Head of caudate nucleus (tissue), 42 donors: ENCODE measurements at regions of chr5 and their contacts with region 1.

Region 1: GRCh38 chr5:172697123-172698121 is 56.4 kb downstream of the NEURL1B start:
- DNase-seq: peak; percentile 70 to 95 (median 87)

Region 2: DNA sequence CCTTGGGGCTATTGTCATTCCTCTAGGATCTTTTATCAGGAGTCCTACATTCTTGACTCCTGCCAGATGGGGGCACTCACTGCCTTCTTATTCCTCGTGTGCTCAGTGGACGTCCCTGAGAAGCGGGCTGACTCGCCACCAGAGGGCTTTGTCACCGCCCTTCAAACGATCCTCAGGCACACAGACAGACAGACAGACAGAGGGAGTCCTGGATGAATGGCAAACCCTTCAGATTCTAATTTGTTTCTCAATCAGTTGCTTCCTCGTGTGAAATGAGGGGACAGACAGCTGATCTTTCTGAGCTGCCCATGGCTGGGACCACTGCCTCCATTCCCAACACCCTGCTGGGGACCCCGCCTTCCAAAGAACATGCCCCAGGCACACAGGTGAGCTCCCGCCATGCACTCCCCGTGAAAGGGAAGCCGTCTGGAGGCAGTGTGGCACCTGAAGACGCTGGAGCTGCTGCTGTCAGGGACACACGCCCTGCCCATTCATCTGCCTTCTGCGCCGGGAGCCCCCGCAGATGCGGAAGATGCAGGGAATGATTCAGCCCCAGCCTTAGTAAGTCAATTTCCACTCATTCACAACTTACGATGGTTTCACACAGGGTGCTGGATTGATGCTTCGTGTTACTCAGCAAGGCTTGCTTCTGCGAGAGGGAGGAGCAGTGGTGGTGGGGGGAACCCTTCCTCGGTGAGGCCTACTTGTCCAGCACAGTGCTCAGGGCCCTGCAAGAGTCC is 218.2 kb before region 1 on chr5:
- intact Hi-C with region 1: loop called (anchors 1 kb)
- DNase-seq: peak; percentile 74 to 94 (median 88)

Region 3: GRCh38 chr5:172772112-172772906 is 74.9 kb after region 1 on chr5:
- intact Hi-C with region 1: no loop called
- DNase-seq: peak; percentile 53 to 91 (median 80)